Caco-2 (cell line): ENCODE measurements at regions of chr13 and their contacts with region 1.

Region 1: GRCh38 chr13:96958286-96958891 is 35.9 kb downstream of the OXGR1 start:
- DNase-seq: peak in 1 of 2 experiments; percentile 44
- H3K4me3 ChIP-seq: no peak overlapping the region
- H3K4me3 Mint-ChIP-seq: no peak overlapping the region
- H3K27ac Mint-ChIP-seq: no peak overlapping the region
- H3K4me1 ChIP-seq: no peaks in the 10 kb centered on the region
- H3K4me1 Mint-ChIP-seq: no peaks in the 10 kb centered on the region
- H3K27me3 ChIP-seq: no peaks in the 10 kb centered on the region
- H3K27me3 Mint-ChIP-seq: peaks cover 6% of the 10 kb centered on the region
- CTCF ChIP-seq: peak; percentile 57 to 87

Region 2: DNA sequence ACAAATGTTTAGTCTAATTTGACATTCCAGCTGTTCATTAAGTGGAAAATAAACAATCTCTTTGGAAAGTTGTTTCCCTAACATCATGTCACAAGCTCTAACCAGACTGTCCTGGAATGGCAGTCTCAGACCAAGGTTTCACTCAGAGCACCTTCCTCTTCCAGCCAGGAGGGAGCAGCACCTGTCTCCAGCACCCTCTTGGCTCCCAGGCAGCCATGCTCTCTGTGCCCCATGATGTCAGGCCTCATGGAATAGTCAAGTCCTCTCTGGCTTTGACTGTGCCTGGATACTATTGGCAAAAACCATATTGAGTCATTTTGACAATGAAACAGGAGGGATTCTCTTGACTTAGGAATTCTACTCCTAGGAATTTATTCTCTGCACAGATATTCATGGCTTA is 135.5 kb before region 1 on chr13:
- CTCF ChIA-PET with region 1: interaction called, 8 read pairs
- POLR2A ChIA-PET with region 1: no interaction called
- intact Hi-C with region 1: loop called (anchors 1 kb)
- DNase-seq: peak; percentile 53 to 64
- H3K4me3 ChIP-seq: no peak overlapping the region
- H3K4me3 Mint-ChIP-seq: no peak overlapping the region
- H3K27ac Mint-ChIP-seq: no peak overlapping the region
- H3K4me1 ChIP-seq: no peaks in the 10 kb centered on the region
- H3K4me1 Mint-ChIP-seq: no peaks in the 10 kb centered on the region
- H3K27me3 ChIP-seq: no peaks in the 10 kb centered on the region
- H3K27me3 Mint-ChIP-seq: no peaks in the 10 kb centered on the region
- CTCF ChIP-seq: peak; percentile 62 to 77

Region 3: GRCh38 chr13:96834628-96835027 is 123.8 kb before region 1 on chr13:
- CTCF ChIA-PET with region 1: no interaction called
- POLR2A ChIA-PET with region 1: no interaction called
- intact Hi-C with region 1: no loop called
- DNase-seq: no peak
- H3K4me3 ChIP-seq: no peak overlapping the region
- H3K4me3 Mint-ChIP-seq: no peak overlapping the region
- H3K27ac Mint-ChIP-seq: no peak overlapping the region
- H3K4me1 ChIP-seq: no peaks in the 10 kb centered on the region
- H3K4me1 Mint-ChIP-seq: no peaks in the 10 kb centered on the region
- H3K27me3 ChIP-seq: peaks cover 2% of the 10 kb centered on the region; the same call in 1 of the 2 replicates
- H3K27me3 Mint-ChIP-seq: peaks cover 10% of the 10 kb centered on the region
- CTCF ChIP-seq: no peak